Activated B cell treated with CpG ODN at 0.5 μM for 24 hours (primary cell): ENCODE measurements at regions of chr20 and their contacts with region 1.

Region 1: DNA sequence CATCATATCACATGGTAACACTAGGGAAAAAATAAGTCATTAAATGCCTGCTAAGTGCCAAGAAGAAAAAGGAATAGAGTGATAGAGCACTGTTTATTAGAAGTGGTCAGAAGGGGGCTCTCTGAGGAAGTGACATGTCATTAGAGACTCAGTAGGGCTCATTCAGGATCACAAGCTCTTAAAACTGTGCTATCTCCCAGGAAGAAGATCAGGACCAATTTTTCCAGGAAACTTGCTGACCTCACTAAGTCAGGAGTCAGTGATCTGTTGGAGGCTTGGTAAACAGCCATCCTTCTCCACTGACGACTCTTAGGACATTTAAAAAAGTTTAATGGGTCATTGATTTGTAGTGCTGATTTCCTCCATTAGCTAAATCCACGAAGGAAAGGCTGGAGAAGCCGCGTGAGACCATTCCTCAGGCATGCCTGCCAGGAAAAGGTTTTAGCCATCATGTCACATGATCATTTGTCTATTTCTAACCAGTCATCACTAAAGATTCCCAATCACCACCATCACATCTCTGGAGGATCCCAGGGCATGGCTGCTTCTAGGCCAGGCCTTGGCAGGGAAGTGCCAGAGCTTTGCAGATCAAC is 5.9 kb upstream of the PTPN1 start:
- DNase-seq: no peak
- ATAC-seq: peak; percentile 62
- H3K4me3 Mint-ChIP-seq: no peak overlapping the region
- H3K27ac Mint-ChIP-seq: peak overlapping the region; percentile 70
- H3K4me1 Mint-ChIP-seq: peaks cover 38% of the 10 kb centered on the region
- H3K27me3 Mint-ChIP-seq: no peaks in the 10 kb centered on the region
- CTCF ChIP-seq: no peak

Region 2: DNA sequence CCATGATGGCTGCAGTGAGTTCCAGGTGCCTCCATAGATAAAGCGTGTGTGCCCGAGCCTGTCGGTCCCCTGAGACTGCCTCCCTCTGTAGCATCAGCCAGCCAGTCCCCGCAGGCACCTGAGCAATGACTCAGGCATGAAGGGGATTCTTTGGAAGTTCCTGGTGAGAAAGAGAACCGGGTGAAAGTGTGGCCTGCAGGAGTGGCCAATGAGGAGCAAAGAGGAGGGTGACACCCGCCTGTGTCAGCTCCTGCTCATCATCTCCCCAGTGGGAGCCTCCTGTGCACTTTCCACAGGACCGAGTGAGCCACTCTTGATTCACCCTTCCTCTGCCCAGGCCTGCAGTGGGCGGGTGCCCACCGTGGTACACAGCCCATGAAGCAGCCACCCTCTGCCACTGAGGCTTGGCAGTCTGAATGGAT is 65.3 kb before region 1 on chr20:
- CTCF ChIA-PET with region 1: no interaction called
- POLR2A ChIA-PET with region 1: no interaction called
- intact Hi-C with region 1: no loop called
- DNase-seq: no peak
- ATAC-seq: no peak
- H3K4me3 Mint-ChIP-seq: no peak overlapping the region
- H3K27ac Mint-ChIP-seq: no peak overlapping the region
- H3K4me1 Mint-ChIP-seq: no peaks in the 10 kb centered on the region
- H3K27me3 Mint-ChIP-seq: peaks cover 6% of the 10 kb centered on the region
- CTCF ChIP-seq: no peak

Region 3: GRCh38 chr20:50478162-50479036 is 25.9 kb before region 1 on chr20:
- CTCF ChIA-PET with region 1: interaction called, 10 read pairs
- POLR2A ChIA-PET with region 1: interaction called, 20 read pairs
- intact Hi-C with region 1: loop called (anchors 1 kb)
- DNase-seq: peak; percentile 53
- ATAC-seq: peak; percentile 99
- H3K4me3 Mint-ChIP-seq: peak overlapping the region; percentile 1
- H3K27ac Mint-ChIP-seq: no peak overlapping the region
- H3K4me1 Mint-ChIP-seq: peaks cover 43% of the 10 kb centered on the region
- H3K27me3 Mint-ChIP-seq: no peaks in the 10 kb centered on the region
- CTCF ChIP-seq: peak; percentile 24

Region 4: GRCh38 chr20:50484276-50484976 is 19.9 kb before region 1 on chr20:
- CTCF ChIA-PET with region 1: interaction called, 10 read pairs
- POLR2A ChIA-PET with region 1: interaction called, 20 read pairs
- intact Hi-C with region 1: no loop called
- DNase-seq: no peak
- ATAC-seq: no peak
- H3K4me3 Mint-ChIP-seq: peak overlapping the region; percentile 91
- H3K27ac Mint-ChIP-seq: peak overlapping the region; percentile 93
- H3K4me1 Mint-ChIP-seq: peaks cover 49% of the 10 kb centered on the region
- H3K27me3 Mint-ChIP-seq: no peaks in the 10 kb centered on the region
- CTCF ChIP-seq: no peak

Region 5: DNA sequence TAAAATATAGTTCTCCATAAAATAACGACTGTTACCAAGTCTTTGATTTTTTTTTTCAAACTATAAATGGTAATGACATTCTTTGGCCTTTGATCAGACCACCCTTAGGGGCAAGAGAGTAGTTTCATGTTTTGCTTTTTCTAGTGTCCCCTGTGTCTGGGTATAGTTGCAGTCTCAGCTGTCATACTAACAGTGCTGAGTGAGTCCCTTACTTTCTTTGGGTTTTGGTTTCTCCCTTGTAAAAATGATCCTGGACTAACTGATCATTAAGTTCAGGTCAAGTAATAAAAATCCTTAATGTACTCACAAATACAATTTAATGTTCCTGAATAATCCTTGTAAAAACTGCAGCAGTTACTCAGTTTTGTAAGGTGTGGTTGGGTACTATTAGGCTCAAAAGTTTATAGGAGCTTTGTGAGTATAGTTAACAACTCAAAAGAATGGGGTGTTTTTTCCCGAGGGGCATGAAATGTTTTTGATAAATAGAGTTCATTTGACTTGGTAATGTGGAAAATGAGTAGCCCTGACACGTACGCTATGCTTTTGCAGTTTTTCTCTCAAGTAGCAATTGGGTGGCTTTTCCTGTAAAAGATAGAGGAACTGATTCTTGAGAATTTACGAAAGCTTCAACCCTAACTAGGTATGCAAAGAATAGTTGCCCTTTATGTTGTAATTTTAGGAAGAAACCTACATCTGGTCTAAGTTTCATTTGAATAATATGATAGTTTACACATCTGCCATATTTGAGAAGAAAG is 12.0 kb after region 1 on chr20:
- CTCF ChIA-PET with region 1: interaction called, 22 read pairs
- POLR2A ChIA-PET with region 1: interaction called, 1,679 read pairs
- intact Hi-C with region 1: no loop called
- DNase-seq: no peak
- ATAC-seq: peak; percentile 78
- H3K4me3 Mint-ChIP-seq: peak overlapping the region; percentile 90
- H3K27ac Mint-ChIP-seq: peak overlapping the region; percentile 96
- H3K4me1 Mint-ChIP-seq: peaks cover 95% of the 10 kb centered on the region
- H3K27me3 Mint-ChIP-seq: no peaks in the 10 kb centered on the region
- CTCF ChIP-seq: no peak

Region 6: DNA sequence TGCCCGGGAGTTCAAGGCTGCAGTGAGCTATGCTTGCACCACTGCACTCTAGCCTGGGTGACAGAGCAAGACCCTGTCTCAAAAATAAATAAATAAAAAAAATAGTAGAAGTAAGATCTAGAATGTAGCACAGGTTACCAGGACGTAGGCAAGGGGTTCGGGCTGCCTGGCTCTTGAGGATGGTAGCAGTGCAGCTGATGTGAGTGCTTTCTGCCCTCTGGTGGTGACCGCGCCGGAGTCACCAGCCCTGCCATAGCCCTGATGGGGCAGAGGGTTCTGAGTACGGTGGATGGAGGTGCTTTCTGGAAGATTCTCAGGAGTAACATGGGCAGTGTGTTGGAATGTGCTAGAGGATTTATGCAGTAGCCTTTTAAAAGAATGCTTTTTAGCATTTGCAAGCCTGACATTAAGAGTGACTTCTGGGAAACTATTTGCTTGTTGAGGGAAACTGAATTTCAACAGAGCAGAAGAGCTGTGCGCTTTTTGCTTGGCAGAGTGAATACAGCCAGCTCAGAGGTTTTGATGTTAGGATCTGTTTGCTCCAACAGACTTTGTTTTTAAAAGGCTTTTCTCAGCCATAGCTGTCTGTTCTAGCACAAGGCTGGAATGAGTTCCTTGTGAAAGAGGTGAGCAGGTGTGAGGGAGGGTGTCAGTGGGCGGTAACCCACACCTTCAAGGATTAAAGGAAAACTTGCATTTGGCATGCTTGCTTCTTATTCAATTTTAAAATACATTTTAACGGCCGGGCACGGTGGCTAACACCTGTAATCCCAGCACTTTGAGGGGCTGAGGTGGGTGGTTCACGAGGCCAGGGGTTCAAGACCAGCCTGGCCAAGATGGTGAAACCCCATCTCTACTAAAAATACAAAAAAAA is 71.8 kb after region 1 on chr20:
- CTCF ChIA-PET with region 1: interaction called, 154 read pairs
- POLR2A ChIA-PET with region 1: interaction called, 1,679 read pairs
- intact Hi-C with region 1: loop called (anchors 1 kb)
- DNase-seq: peak; percentile 52
- ATAC-seq: peak; percentile 84
- H3K4me3 Mint-ChIP-seq: no peak overlapping the region
- H3K27ac Mint-ChIP-seq: peak overlapping the region; percentile 77
- H3K4me1 Mint-ChIP-seq: peaks cover 55% of the 10 kb centered on the region
- H3K27me3 Mint-ChIP-seq: no peaks in the 10 kb centered on the region
- CTCF ChIP-seq: peak; percentile 48

Region 7: DNA sequence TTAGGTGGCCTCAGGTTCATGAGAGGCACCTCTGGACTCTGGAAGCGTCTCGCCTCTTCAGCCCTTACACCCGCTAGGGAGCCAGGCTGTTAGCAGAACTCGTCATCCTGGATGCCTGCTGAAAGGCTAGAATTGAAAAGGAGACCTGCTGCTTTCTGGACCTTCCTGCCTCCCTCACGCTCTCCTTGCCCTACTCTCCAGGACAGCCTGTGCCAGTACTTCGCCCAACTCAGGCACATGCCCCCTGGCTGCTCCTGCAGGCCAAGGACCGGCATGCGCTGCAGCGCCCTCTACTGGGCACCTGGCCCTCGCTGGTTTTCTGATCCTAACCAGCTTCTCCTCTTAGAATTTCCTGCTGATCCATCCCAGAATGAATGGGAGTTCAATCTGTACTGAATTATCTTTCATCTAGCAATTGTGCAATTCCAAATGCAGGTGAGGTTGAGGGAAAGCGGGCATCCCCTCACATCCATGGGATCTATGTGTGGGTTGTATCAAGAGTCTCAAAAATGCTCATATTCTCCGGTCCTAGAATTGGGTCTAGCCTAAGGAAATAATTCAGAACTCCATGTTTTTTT is 83.8 kb after region 1 on chr20:
- CTCF ChIA-PET with region 1: interaction called, 11 read pairs
- POLR2A ChIA-PET with region 1: interaction called, 11 read pairs
- intact Hi-C with region 1: no loop called
- DNase-seq: peak; percentile 63
- ATAC-seq: peak; percentile 64
- H3K4me3 Mint-ChIP-seq: no peak overlapping the region
- H3K27ac Mint-ChIP-seq: peak overlapping the region; percentile 54
- H3K4me1 Mint-ChIP-seq: peaks cover 13% of the 10 kb centered on the region
- H3K27me3 Mint-ChIP-seq: no peaks in the 10 kb centered on the region
- CTCF ChIP-seq: peak; percentile 64